ENCODE measurements at regions of chr2 and their contacts with region 1.

Region 1: GRCh38 chr2:19347619-19348562 is 10.5 kb downstream of the OSR1 start:
- DNase-seq: peak; percentile 100
- ATAC-seq: peak; percentile 89
- H3K4me3 Mint-ChIP-seq: peak overlapping the region; percentile 98
- H3K27ac Mint-ChIP-seq: peak overlapping the region; percentile 98
- H3K4me1 Mint-ChIP-seq: peaks cover 35% of the 10 kb centered on the region
- H3K27me3 Mint-ChIP-seq: peaks cover 28% of the 10 kb centered on the region
- CTCF ChIP-seq: no peak

Region 2: DNA sequence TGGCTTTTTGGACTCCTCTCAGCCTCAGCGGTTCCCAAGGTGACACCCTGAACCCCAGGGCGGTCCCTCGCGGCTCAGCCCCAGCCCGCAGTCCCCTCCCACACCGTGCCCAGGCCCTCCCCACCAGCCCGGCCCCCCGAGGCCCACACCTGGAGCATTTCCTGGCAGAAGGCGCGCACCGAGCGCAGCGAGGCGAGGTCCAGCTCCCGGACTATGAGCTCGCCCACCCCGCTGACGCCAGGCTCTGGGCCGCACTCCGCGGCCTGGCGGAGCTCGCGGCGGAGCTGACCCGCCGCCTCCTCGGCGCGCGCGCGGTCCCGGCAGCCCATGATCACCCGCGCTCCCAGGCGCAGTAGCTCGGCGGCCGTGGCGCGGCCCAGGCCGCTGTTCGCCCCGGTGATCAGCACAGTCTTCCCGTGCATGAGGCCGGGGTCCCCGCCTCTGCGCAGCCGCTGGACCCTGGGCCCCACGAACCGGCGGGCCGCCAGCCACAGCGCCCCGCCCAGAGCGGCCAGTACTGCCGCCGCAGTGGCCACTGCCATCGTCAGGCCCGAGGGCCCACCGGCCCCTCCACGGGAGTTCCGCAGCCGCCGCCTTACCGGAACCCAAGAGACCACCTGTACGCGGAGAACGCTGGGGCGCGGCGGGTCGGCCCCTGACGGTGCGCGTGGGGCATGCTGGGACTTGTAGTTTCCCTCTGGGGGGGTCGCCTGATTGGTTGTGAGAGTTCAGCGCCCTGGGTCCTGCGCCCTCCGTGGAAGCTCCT is 787.7 kb before region 1 on chr2 and contains the start of gene RDH14:
- CTCF ChIA-PET with region 1: no interaction called
- POLR2A ChIA-PET with region 1: interaction called, 24 read pairs
- intact Hi-C with region 1: loop called (anchors 1 kb)
- DNase-seq: peak; percentile 91
- ATAC-seq: peak; percentile 92
- H3K4me3 Mint-ChIP-seq: peak within 1 kb of the TSS; percentile 92
- H3K27ac Mint-ChIP-seq: peak within 1 kb of the TSS; percentile 91
- H3K4me1 Mint-ChIP-seq: peaks cover 32% of the 10 kb centered on the region
- H3K27me3 Mint-ChIP-seq: no peaks in the 10 kb centered on the region
- CTCF ChIP-seq: no peak
- total RNA-seq, gene RDH14: 18.7 and 19.6 TPM in 2 replicates

Region 3: GRCh38 chr2:19901442-19902215 is 553.7 kb after region 1 on chr2 and contains the start of gene TTC32:
- CTCF ChIA-PET with region 1: no interaction called
- POLR2A ChIA-PET with region 1: interaction called, 3 read pairs
- intact Hi-C with region 1: loop called (anchors 1 kb)
- DNase-seq: peak; percentile 91
- ATAC-seq: peak; percentile 91
- H3K4me3 Mint-ChIP-seq: peak within 1 kb of the TSS; percentile 99
- H3K27ac Mint-ChIP-seq: peak within 1 kb of the TSS; percentile 99
- H3K4me1 Mint-ChIP-seq: peaks cover 44% of the 10 kb centered on the region
- H3K27me3 Mint-ChIP-seq: peaks cover 7% of the 10 kb centered on the region
- CTCF ChIP-seq: no peak
- total RNA-seq, gene TTC32: 18.4 and 22.8 TPM in 2 replicates

Region 4: DNA sequence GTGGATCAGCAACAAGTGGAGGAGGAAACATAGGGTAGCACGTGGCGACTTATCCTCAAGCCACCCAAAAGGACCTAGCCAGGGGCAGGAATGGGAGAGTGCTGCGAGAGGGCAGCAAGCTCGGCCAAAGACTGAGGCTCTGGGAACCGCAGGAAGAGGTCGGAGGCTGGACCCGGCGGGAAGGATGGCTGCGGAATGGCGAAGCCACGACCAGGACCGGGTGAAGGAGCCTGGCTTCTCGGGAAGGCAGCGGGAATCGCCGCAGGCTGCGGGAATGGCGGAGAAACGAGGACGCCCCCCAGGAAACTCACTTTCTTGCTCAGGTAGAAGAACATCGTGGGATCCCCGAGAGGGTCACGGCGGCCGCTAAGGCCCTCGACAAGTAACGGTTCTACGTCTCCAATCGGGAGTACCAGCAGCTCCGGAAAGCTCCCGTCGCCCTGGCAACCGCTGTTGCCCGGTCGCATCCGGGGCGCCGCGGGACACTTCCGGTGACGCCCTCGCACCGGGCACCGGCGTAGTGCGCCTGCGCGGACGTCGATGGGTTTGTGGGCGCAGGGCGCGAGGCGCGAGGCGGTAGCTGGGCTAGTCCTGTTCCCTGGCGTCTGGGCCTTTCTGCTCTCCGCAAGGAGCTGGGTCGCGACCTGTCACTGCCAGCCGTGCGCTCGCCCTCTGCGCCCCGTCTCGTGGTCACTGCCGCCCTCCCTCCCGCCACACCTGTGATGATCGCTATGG is 642.0 kb after region 1 on chr2 and contains the start of gene WDR35:
- CTCF ChIA-PET with region 1: no interaction called
- POLR2A ChIA-PET with region 1: no interaction called
- intact Hi-C with region 1: loop called (anchors 5 kb)
- DNase-seq: peak; percentile 93
- ATAC-seq: peak; percentile 89
- H3K4me3 Mint-ChIP-seq: peak within 1 kb of the TSS; percentile 91
- H3K27ac Mint-ChIP-seq: peak within 1 kb of the TSS; percentile 85
- H3K4me1 Mint-ChIP-seq: peaks cover 31% of the 10 kb centered on the region
- H3K27me3 Mint-ChIP-seq: peaks cover 18% of the 10 kb centered on the region
- CTCF ChIP-seq: no peak
- total RNA-seq, gene WDR35: 8.1 and 8.2 TPM in 2 replicates

Region 5: DNA sequence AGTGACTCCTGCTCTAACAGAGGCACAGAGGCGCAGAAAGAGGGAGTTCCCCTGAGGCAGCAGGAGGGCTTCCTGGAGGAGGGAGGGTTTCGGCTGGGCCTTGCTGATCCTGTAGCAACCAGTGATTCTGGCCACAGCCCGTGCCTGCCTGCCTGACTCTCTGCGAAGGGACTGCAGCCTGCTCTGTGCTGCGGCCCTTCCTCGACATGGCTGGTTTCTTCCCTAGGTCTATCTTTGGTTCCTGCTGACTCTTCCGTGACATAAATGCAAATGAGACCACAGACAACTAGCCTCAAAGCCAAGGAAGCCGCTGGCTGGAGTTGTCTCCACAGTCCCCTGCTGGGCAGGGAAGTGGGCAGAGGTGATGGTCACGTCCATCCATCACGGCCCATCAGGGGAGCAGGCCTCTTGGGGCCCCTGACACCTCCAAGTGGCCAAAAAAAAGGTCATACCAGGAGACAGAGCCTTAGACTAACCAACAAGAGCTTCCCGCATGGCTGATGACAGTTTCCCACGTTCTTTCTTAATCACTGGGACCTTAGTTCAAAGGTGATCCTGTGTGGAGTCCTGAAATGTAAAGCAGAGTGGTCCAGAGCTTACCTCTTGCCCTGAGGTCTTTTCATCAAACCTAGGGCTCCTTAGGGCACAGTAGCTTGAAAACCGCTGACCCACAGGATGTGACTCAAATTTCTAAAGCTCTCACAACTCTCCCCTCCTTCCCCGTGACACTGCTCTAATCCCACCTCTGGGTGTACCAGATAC is 1247.7 kb after region 1 on chr2:
- CTCF ChIA-PET with region 1: no interaction called
- POLR2A ChIA-PET with region 1: no interaction called
- intact Hi-C with region 1: loop called (anchors 5 kb)
- DNase-seq: peak; percentile 45
- ATAC-seq: peak; percentile 83
- H3K4me3 Mint-ChIP-seq: peak overlapping the region; percentile 72
- H3K27ac Mint-ChIP-seq: peak overlapping the region; percentile 82
- H3K4me1 Mint-ChIP-seq: peaks cover 38% of the 10 kb centered on the region
- H3K27me3 Mint-ChIP-seq: peaks cover 21% of the 10 kb centered on the region
- CTCF ChIP-seq: no peak

Region 6: GRCh38 chr2:20666304-20667150 is 1318.6 kb after region 1 on chr2 and contains the start of gene GDF7:
- CTCF ChIA-PET with region 1: no interaction called
- POLR2A ChIA-PET with region 1: no interaction called
- intact Hi-C with region 1: loop called (anchors 5 kb)
- DNase-seq: peak; percentile 67
- ATAC-seq: peak; percentile 78
- H3K4me3 Mint-ChIP-seq: peak within 1 kb of the TSS; percentile 87
- H3K27ac Mint-ChIP-seq: peak within 1 kb of the TSS; percentile 82
- H3K4me1 Mint-ChIP-seq: peaks cover 32% of the 10 kb centered on the region
- H3K27me3 Mint-ChIP-seq: peaks cover 8% of the 10 kb centered on the region
- CTCF ChIP-seq: no peak
- total RNA-seq, gene GDF7: 5.9 and 6.7 TPM in 2 replicates

Region 7: DNA sequence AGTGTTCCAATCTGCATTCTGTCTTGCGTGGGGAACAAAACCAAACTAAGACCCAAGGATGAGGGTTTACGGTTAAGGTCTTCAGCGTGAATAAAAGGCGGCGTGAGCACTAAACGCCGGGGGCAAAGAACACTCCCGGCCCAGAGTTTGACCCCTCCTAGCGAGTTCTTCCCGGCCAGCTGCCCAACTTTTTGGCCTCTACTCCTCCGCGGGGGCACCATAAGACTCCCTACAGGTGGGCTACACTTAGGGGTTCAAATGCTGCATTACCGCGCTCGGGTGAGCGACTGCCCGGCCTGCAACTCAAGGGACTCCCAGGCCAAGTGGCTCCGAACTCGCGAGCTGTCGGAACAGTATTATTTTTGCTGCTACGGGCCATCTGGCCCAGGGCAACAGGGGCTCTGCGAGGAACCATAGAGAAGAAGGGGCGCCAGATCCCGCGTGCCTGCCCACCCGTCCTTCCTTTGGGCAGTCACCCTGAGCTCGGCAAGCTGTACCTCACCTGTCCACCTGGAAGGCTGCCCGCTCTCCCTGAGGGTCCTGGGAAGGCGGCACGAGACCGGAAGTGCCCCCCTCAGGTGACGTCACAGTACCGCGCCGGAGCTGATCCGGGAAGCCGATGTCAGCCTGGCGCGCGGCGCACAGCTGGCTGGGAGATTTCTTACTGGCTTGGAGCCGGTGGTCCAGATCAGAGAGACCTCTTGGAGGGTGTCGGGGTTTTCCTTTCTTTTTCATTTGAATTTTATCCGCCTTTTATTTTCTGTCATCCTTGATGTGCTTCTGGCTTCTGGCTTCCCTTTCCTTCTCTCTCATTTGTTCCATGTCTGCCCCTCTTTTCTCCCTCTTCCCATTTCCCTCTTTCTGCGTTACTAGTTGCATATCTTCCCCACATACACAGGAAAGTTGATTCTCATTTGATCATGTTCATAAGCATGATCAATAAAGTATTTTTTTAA is 1474.9 kb after region 1 on chr2 and contains the start of gene LDAH:
- CTCF ChIA-PET with region 1: no interaction called
- POLR2A ChIA-PET with region 1: no interaction called
- intact Hi-C with region 1: loop called (anchors 5 kb)
- DNase-seq: peak; percentile 84
- ATAC-seq: peak; percentile 83
- H3K4me3 Mint-ChIP-seq: peak within 1 kb of the TSS; percentile 97
- H3K27ac Mint-ChIP-seq: peak within 1 kb of the TSS; percentile 97
- H3K4me1 Mint-ChIP-seq: peaks cover 21% of the 10 kb centered on the region
- H3K27me3 Mint-ChIP-seq: no peaks in the 10 kb centered on the region
- CTCF ChIP-seq: no peak
- total RNA-seq, gene LDAH: 31.2 and 31.7 TPM in 2 replicates

Measured in activated B cell treated with CpG ODN at 0.5 μM for 24 hours (primary cell).